ENCODE measurements at regions of chr14 and their contacts with region 1.

Region 1: GRCh38 chr14:76181546-76181945 is 29.8 kb downstream of the GPATCH2L start:
- DNase-seq: peak; percentile 24
- H3K4me3 ChIP-seq: no peak overlapping the region
- H3K27ac ChIP-seq: no peak overlapping the region
- H3K4me1 ChIP-seq: no peaks in the 10 kb centered on the region
- H3K27me3 ChIP-seq: no peaks in the 10 kb centered on the region
- CTCF ChIP-seq: peak; percentile 52

Region 2: GRCh38 chr14:76007852-76008251 is 173.7 kb before region 1 on chr14:
- CTCF ChIA-PET with region 1: no interaction called
- POLR2A ChIA-PET with region 1: no interaction called
- intact Hi-C with region 1: no loop called
- DNase-seq: no peak
- H3K4me3 ChIP-seq: no peak overlapping the region
- H3K27ac ChIP-seq: no peak overlapping the region
- H3K4me1 ChIP-seq: no peaks in the 10 kb centered on the region
- H3K27me3 ChIP-seq: no peaks in the 10 kb centered on the region
- CTCF ChIP-seq: no peak

Region 3: GRCh38 chr14:76065519-76065918 is 116.0 kb before region 1 on chr14:
- CTCF ChIA-PET with region 1: no interaction called
- POLR2A ChIA-PET with region 1: interaction called, 17 read pairs
- intact Hi-C with region 1: no loop called
- DNase-seq: no peak
- H3K4me3 ChIP-seq: no peak overlapping the region
- H3K27ac ChIP-seq: no peak overlapping the region
- H3K4me1 ChIP-seq: no peaks in the 10 kb centered on the region
- H3K27me3 ChIP-seq: no peaks in the 10 kb centered on the region
- CTCF ChIP-seq: no peak

Region 4: GRCh38 chr14:76250302-76250701 is 68.8 kb after region 1 on chr14:
- CTCF ChIA-PET with region 1: no interaction called
- POLR2A ChIA-PET with region 1: interaction called, 20 read pairs
- intact Hi-C with region 1: no loop called
- DNase-seq: no peak
- H3K4me3 ChIP-seq: no peak overlapping the region
- H3K27ac ChIP-seq: no peak overlapping the region
- H3K4me1 ChIP-seq: no peaks in the 10 kb centered on the region
- H3K27me3 ChIP-seq: peaks cover 27% of the 10 kb centered on the region
- CTCF ChIP-seq: no peak